MCF 10A (cell line): ENCODE measurements at regions of chr10 and their contacts with region 1.

Region 1: GRCh38 chr10:80078448-80079311 is at the start of gene TMEM254:
- DNase-seq: peak; percentile 83
- H3K4me3 Mint-ChIP-seq: peak within 1 kb of the TSS; percentile 82
- H3K27ac Mint-ChIP-seq: peak within 1 kb of the TSS; percentile 91
- H3K4me1 Mint-ChIP-seq: peaks cover 15% of the 10 kb centered on the region
- H3K27me3 Mint-ChIP-seq: no peaks in the 10 kb centered on the region
- CTCF ChIP-seq: no peak
- total RNA-seq, gene TMEM254: 24.7 and 31.6 TPM in 2 replicates

Region 2: GRCh38 chr10:79948976-79949722 is 129.5 kb before region 1 on chr10 and contains the start of gene SFTPD:
- CTCF ChIA-PET with region 1: no interaction called
- POLR2A ChIA-PET with region 1: interaction called, 12 read pairs
- intact Hi-C with region 1: no loop called
- DNase-seq: peak; percentile 94
- H3K4me3 Mint-ChIP-seq: peak within 1 kb of the TSS; percentile 42
- H3K27ac Mint-ChIP-seq: peak within 1 kb of the TSS; percentile 52
- H3K4me1 Mint-ChIP-seq: peaks cover 14% of the 10 kb centered on the region
- H3K27me3 Mint-ChIP-seq: peaks cover 7% of the 10 kb centered on the region
- CTCF ChIP-seq: no peak
- total RNA-seq, gene SFTPD: 0.23 TPM in 1 of 2 replicates, not detected in the other

Region 3: DNA sequence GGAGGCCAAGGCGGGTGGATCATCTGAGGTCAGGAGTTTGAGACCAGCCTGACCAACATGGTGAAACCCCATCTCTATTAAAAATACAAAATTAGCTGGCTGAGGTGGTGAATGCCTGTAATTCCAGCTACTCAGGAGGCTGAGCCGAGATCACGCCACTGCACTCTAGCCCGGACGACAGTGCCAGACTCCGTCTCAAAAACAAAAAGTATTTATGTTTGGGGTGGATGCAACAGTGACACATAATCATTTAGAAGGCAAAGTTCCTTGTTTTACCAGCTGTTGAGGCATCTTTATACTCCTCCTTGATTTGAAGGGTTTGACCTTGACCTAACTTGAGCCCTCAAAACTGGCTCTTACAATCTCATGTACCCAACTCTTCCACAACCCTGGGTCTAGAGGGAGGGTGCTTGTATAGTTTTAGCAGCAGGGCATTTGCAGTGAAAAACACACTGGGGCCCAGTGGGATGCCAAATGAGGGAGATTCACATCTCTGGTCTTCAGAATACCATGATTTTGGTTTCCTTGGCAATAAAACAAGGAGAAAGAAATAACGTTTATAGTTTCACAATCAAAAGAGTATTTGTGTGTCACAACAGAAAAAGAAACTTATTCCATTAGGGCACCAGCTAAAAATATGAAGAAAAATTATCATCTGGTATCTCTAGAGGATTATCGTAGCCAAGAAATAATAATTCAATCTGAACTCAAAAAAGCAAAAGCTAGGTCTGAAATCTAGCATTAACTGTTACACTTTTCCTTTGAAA is 14.4 kb before region 1 on chr10:
- CTCF ChIA-PET with region 1: interaction called, 5 read pairs
- POLR2A ChIA-PET with region 1: interaction called, 10 read pairs
- intact Hi-C with region 1: no loop called
- DNase-seq: no peak
- H3K4me3 Mint-ChIP-seq: no peak overlapping the region
- H3K27ac Mint-ChIP-seq: no peak overlapping the region
- H3K4me1 Mint-ChIP-seq: no peaks in the 10 kb centered on the region
- H3K27me3 Mint-ChIP-seq: no peaks in the 10 kb centered on the region
- CTCF ChIP-seq: no peak

Region 4: DNA sequence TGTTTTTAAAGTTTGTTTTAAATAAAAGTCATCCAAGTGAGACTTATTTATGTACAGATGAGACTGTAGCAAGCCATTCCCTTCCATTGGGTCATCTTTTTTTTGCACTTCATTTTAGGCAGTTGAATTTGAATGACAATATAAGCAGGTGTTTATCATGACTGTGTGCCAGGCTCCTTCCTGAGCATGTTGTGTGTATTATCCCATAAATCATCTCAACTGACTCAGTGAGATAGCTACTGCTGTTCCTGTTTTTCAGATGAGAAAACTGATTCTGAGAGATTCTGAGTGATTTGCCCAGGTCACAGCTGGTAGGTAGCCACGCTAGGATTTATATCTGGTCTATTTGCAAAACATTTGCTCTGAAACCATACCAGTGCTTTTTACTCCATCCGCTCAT is 11.4 kb after region 1 on chr10:
- CTCF ChIA-PET with region 1: no interaction called
- POLR2A ChIA-PET with region 1: interaction called, 11 read pairs
- intact Hi-C with region 1: no loop called
- DNase-seq: no peak
- H3K4me3 Mint-ChIP-seq: no peak overlapping the region
- H3K27ac Mint-ChIP-seq: no peak overlapping the region
- H3K4me1 Mint-ChIP-seq: no peaks in the 10 kb centered on the region
- H3K27me3 Mint-ChIP-seq: no peaks in the 10 kb centered on the region
- CTCF ChIP-seq: no peak

Region 5: DNA sequence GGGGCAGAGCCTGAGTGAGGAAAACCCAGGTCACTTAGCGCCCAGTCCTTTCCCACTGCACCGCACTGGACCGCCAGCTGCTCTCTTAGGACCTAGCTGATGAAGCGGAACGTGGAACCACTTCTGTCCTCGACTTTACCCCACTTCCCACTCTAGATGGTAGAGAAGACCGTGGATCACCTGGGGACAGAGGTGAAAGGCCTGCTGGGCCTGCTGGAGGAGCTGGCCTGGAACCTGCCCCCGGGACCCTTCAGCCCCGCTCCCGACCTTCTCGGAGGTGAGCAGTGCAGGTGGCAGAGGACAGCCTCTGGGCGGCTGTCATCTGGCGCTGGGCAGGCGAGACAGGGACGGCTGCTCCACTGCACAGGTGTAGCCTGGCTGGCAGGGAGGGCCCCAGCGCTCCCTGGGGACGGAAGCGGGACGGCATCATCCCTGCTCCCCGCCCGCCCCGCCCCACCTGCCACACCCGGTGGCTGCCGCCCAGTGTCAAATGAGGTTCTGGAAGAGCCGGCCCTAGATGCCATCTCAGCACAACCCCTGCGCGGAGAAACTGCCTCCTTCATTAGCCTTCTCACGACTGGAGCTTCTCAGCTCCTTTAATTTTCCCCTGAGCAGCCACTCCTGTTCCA is 65.5 kb after region 1 on chr10:
- CTCF ChIA-PET with region 1: interaction called, 5 read pairs
- POLR2A ChIA-PET with region 1: interaction called, 13 read pairs
- intact Hi-C with region 1: no loop called
- DNase-seq: peak; percentile 36
- H3K4me3 Mint-ChIP-seq: no peak overlapping the region
- H3K27ac Mint-ChIP-seq: no peak overlapping the region
- H3K4me1 Mint-ChIP-seq: peaks cover 16% of the 10 kb centered on the region
- H3K27me3 Mint-ChIP-seq: no peaks in the 10 kb centered on the region
- CTCF ChIP-seq: no peak

Region 6: DNA sequence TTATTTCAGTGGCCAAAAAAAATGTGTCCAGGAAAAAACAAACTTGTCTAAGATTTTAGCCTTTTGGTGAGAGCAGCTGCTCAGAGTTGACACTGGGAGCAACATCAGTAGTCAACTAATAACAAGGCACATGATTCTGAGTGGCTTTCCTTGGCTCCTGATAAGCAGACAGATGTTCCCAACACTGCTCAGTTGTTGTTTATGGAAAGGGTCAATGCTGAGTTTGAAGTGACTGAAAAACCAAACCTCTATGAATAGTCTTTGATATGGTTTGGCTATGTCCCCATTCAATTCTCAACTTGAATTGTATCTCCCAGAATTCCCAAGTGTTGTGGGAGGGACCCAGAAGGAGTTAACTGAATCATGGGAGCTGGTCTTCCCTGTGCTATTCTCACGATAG is 265.6 kb after region 1 on chr10:
- CTCF ChIA-PET with region 1: no interaction called
- POLR2A ChIA-PET with region 1: no interaction called
- intact Hi-C with region 1: no loop called
- DNase-seq: no peak
- H3K4me3 Mint-ChIP-seq: no peak overlapping the region
- H3K27ac Mint-ChIP-seq: no peak overlapping the region
- H3K4me1 Mint-ChIP-seq: no peaks in the 10 kb centered on the region
- H3K27me3 Mint-ChIP-seq: no peaks in the 10 kb centered on the region
- CTCF ChIP-seq: no peak